Activated CD4-positive, alpha-beta memory T cell treated with anti-CD3 and anti-CD28 coated beads for 36 hours (primary cell): ENCODE measurements at regions of chr7 and their contacts with region 1.

Region 1: DNA sequence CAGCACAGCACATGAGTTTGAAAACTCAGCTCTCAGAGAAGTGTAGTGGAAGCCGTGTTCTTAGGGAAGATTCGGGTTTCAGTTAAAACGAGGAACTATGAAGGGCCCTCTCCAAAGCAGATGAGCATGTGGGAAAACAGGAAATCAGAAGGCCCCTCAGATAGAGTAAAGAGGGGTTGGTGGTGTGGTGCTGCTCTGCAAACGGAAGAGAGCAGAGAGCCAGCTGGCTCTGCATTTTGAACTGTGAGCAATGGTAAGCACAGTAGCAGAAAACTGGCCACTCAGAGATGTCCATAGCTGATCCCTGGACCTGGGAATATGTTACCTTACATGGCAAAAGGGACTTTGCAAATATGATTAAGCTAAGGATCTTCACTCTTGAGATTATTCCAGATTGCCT is 27.9 kb upstream of the CUL1 start:
- DNase-seq: no peak
- H3K4me3 Mint-ChIP-seq: no peak overlapping the region
- H3K27ac Mint-ChIP-seq: no peak overlapping the region
- H3K4me1 Mint-ChIP-seq: no peaks in the 10 kb centered on the region
- H3K27me3 Mint-ChIP-seq: no peaks in the 10 kb centered on the region

Region 2: GRCh38 chr7:147923841-147924240 is 747.0 kb before region 1 on chr7:
- CTCF ChIA-PET with region 1: no interaction called
- POLR2A ChIA-PET with region 1: no interaction called
- intact Hi-C with region 1: no loop called
- DNase-seq: no peak
- H3K4me3 Mint-ChIP-seq: no peak overlapping the region
- H3K27ac Mint-ChIP-seq: no peak overlapping the region
- H3K4me1 Mint-ChIP-seq: no peaks in the 10 kb centered on the region
- H3K27me3 Mint-ChIP-seq: no peaks in the 10 kb centered on the region

Region 3: DNA sequence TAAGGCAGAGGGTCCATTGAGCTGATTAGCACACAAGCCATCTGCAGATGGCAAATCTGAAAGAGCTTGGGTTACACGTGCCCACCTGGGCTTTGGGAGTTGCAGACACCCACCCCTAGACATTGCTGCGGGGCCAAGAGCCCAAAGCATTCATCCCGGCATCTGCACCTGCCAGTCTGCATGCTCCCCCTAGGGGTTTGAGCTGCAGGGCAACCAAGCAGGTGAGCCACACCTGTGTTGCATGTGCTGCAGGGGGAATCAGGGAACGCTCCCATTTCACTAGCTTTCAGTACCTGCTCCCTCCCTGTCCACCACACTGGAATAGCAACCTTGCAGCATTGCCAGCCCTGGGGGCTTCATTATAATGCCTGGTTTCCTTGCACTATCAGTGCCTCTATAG is 59.1 kb before region 1 on chr7:
- CTCF ChIA-PET with region 1: no interaction called
- POLR2A ChIA-PET with region 1: no interaction called
- intact Hi-C with region 1: loop called (anchors 10 kb)
- DNase-seq: no peak
- H3K4me3 Mint-ChIP-seq: no peak overlapping the region
- H3K27ac Mint-ChIP-seq: no peak overlapping the region
- H3K4me1 Mint-ChIP-seq: peaks cover 11% of the 10 kb centered on the region
- H3K27me3 Mint-ChIP-seq: peaks cover 16% of the 10 kb centered on the region

Region 4: DNA sequence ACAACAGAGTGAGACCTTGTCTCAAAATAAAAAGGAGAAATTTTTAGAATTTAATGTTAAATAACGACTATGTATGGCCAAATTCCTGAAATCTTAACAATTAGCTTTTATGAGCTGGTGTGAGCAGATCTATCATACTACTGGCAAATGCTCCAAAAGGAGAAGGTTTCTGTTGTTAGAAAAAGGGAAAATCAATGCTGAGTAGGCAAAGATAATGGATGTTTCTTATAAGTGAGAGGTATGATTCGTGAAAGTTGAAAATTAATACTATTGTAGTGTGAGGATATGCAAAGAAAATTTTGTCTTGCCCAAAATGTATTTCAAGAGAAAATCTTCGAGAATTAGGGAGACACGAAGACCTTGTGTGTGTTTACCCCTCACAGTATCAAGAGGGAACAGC is 12.9 kb before region 1 on chr7:
- CTCF ChIA-PET with region 1: no interaction called
- POLR2A ChIA-PET with region 1: no interaction called
- intact Hi-C with region 1: no loop called
- DNase-seq: no peak
- H3K4me3 Mint-ChIP-seq: no peak overlapping the region
- H3K27ac Mint-ChIP-seq: no peak overlapping the region
- H3K4me1 Mint-ChIP-seq: no peaks in the 10 kb centered on the region
- H3K27me3 Mint-ChIP-seq: no peaks in the 10 kb centered on the region